MCF 10A (cell line): ENCODE measurements at regions of chr3 and their contacts with region 1.

Region 1: DNA sequence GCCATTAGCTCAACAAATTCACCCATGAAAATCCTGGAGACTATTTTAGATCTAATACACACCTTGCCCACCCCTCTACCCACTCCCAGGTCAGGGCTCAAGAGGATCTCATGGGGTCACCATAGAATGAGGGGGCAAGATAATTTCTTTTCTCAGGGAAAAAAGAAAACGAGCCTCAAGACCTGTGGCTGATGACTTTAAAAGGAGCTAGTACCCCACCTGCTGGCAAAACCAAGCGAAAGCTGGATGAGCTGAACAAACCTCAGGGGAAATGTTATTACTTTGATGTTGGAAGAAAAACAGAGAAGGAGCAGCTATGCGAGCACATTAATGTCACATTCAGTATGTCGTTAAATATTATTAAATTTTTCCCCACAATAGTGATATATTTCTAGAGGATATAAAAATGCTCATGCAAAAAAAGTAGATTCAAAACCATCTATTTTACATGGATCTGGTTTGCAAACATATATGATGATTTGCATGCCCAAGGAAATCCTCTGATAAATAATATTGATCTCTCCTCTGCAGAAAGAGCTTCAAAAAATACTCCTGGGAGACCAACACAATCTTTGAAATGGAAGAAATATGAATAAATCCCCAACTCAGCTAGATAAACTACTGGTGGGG is 37.7 kb downstream of the PLD1 start:
- DNase-seq: peak; percentile 78
- H3K4me3 Mint-ChIP-seq: no peak overlapping the region
- H3K27ac Mint-ChIP-seq: no peak overlapping the region
- H3K4me1 Mint-ChIP-seq: peaks cover 25% of the 10 kb centered on the region
- H3K27me3 Mint-ChIP-seq: no peaks in the 10 kb centered on the region
- CTCF ChIP-seq: peak; percentile 70

Region 2: GRCh38 chr3:170961616-170962400 is 810.7 kb before region 1 on chr3:
- CTCF ChIA-PET with region 1: interaction called, 8 read pairs
- POLR2A ChIA-PET with region 1: interaction called, 3 read pairs
- intact Hi-C with region 1: loop called (anchors 2 kb)
- DNase-seq: peak; percentile 45
- H3K4me3 Mint-ChIP-seq: no peak overlapping the region
- H3K27ac Mint-ChIP-seq: no peak overlapping the region
- H3K4me1 Mint-ChIP-seq: no peaks in the 10 kb centered on the region
- H3K27me3 Mint-ChIP-seq: no peaks in the 10 kb centered on the region
- CTCF ChIP-seq: peak; percentile 76

Region 3: GRCh38 chr3:171640520-171641412 is 131.8 kb before region 1 on chr3:
- CTCF ChIA-PET with region 1: interaction called, 130 read pairs
- POLR2A ChIA-PET with region 1: interaction called, 14 read pairs
- intact Hi-C with region 1: no loop called
- DNase-seq: peak; percentile 34
- H3K4me3 Mint-ChIP-seq: no peak overlapping the region
- H3K27ac Mint-ChIP-seq: peak overlapping the region; percentile 29
- H3K4me1 Mint-ChIP-seq: peaks cover 11% of the 10 kb centered on the region
- H3K27me3 Mint-ChIP-seq: no peaks in the 10 kb centered on the region
- CTCF ChIP-seq: no peak

Region 4: DNA sequence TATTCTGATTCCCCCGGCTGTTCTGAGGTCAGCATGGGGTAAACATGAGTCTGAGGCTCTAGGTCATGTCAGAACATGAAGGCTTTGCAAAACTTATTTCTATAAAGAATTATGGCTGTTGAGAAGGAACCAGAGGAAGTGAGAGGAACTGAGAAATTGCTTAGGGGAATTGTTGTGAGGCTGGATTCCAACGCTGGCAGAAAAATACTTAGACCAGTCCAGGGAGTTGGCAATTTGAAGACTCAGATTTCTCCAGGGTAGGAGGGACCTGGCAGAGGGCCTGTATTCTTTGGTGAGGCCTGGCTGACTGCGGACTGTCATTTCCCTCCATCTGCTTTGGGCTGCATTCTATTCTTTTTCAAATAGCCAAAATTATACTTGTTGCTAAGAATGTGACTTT is 117.7 kb before region 1 on chr3:
- CTCF ChIA-PET with region 1: interaction called, 99 read pairs
- POLR2A ChIA-PET with region 1: interaction called, 17 read pairs
- intact Hi-C with region 1: no loop called
- DNase-seq: peak; percentile 78
- H3K4me3 Mint-ChIP-seq: no peak overlapping the region
- H3K27ac Mint-ChIP-seq: peak overlapping the region; percentile 88
- H3K4me1 Mint-ChIP-seq: peaks cover 8% of the 10 kb centered on the region
- H3K27me3 Mint-ChIP-seq: no peaks in the 10 kb centered on the region
- CTCF ChIP-seq: no peak

Region 5: GRCh38 chr3:171710359-171710758 is 62.2 kb before region 1 on chr3:
- CTCF ChIA-PET with region 1: interaction called, 44 read pairs
- POLR2A ChIA-PET with region 1: interaction called, 5 read pairs
- intact Hi-C with region 1: no loop called
- DNase-seq: no peak
- H3K4me3 Mint-ChIP-seq: no peak overlapping the region
- H3K27ac Mint-ChIP-seq: no peak overlapping the region
- H3K4me1 Mint-ChIP-seq: peaks cover 6% of the 10 kb centered on the region
- H3K27me3 Mint-ChIP-seq: no peaks in the 10 kb centered on the region
- CTCF ChIP-seq: no peak

Region 6: DNA sequence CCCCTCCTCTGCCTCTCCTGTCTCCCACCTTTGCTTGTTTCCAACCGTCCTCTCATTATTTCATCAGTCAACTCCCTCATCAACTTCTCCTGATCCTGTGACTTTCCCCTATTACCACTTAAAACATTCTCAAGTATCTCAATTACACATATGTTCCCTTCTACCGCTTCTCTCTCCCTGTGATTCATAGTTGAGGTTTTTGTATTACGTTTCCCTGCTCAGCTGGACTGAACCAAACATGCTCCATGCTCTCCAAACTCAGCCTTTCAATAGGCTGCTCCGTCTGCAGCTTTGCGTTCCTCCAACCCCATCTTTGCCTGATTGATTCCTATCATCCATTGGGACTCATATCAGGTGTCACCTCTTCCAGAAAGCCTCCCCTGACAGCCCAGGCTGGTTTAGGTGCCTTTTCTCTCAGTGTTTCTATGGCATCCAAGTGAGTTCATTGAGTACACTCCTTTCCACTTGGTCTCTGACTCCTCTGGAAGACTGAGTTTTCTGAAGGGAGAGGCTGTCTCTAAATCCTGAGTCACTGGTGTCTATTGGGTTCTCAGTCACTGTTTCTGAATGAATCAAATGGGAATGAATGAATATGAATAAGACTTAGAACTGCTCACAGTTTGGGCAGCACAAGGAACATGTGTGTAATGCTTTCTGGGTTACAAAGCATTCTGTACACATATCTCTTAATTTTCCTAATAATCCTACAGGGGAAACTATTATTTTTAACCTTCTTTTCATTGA is 18.7 kb before region 1 on chr3:
- CTCF ChIA-PET with region 1: interaction called, 20 read pairs
- POLR2A ChIA-PET with region 1: interaction called, 30 read pairs
- intact Hi-C with region 1: no loop called
- DNase-seq: peak; percentile 57
- H3K4me3 Mint-ChIP-seq: no peak overlapping the region
- H3K27ac Mint-ChIP-seq: no peak overlapping the region
- H3K4me1 Mint-ChIP-seq: no peaks in the 10 kb centered on the region
- H3K27me3 Mint-ChIP-seq: no peaks in the 10 kb centered on the region
- CTCF ChIP-seq: no peak

Region 7: DNA sequence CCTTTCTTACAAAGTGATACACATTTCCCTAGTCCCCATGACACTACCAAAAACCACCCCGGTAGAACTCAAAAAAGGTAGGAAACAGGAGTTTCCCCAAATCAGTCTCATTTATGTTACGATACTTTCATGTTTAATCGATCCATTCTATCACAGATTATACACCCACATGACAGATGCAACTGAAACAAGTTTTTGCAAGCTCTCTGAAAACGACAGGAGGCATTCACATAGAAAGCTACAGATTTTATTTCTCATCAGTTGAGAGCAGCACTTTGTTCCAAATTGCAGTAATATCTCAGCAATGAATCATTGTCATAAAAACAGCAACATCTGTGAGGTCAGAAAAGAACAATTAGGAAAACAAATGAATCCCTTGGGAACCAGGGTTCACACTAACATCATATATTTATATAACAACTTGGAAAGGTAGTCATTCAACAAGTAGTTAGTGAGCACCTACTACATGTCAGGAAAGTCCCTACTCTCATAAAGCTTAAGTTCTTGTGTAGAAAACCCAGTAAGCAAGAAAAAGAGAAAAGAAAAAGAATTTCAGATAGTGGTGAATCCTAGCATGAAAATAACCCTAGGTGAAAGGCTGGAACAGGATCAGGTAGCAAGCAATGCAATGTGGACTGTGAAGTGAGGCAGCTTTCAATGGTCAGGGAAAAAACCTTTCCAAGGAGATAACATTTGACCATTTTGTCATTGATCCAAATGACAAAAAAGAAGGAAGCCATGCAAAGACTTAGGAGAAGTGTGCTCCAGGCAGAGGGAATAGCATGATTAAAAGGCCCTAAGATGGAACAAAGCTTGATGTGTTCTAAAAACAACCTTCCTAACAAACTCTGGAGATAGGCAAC is 29.4 kb after region 1 on chr3:
- CTCF ChIA-PET with region 1: interaction called, 17 read pairs
- POLR2A ChIA-PET with region 1: interaction called, 17 read pairs
- intact Hi-C with region 1: no loop called
- DNase-seq: peak; percentile 85
- H3K4me3 Mint-ChIP-seq: peak overlapping the region; percentile 42
- H3K27ac Mint-ChIP-seq: peak overlapping the region; percentile 95
- H3K4me1 Mint-ChIP-seq: peaks cover 44% of the 10 kb centered on the region
- H3K27me3 Mint-ChIP-seq: no peaks in the 10 kb centered on the region
- CTCF ChIP-seq: no peak